Naive thymus-derived CD4-positive, alpha-beta T cell (primary cell): ENCODE measurements at regions of chr10 and their contacts with region 1.

Region 1: GRCh38 chr10:100743626-100744135 is 1.7 kb upstream of the PAX2 start:
- DNase-seq: peak in 6 of 9 donors; percentile 41 to 48 (median 44)
- ATAC-seq: peak; percentile 72
- H3K4me3 ChIP-seq: no peak overlapping the region
- H3K4me3 Mint-ChIP-seq: peak overlapping the region; percentile 23 to 72 (median 58)
- H3K27ac ChIP-seq: no peak overlapping the region
- H3K27ac Mint-ChIP-seq: peak overlapping the region in 1 of 9 donors; percentile 61
- H3K4me1 ChIP-seq: peaks cover 4 to 17% of the 10 kb centered on the region in 2 donors
- H3K4me1 Mint-ChIP-seq: peaks cover 27 to 56% (median 36%) of the 10 kb centered on the region in 7 donors
- H3K27me3 ChIP-seq: peaks cover 10 to 27% of the 10 kb centered on the region in 2 donors
- H3K27me3 Mint-ChIP-seq: peaks cover 60 to 88% (median 66%) of the 10 kb centered on the region in 5 donors

Region 2: GRCh38 chr10:100338434-100339036 is 405.1 kb before region 1 on chr10:
- CTCF ChIA-PET with region 1: no interaction called
- POLR2A ChIA-PET with region 1: no interaction called
- intact Hi-C with region 1: loop called in 1 of 2 experiments (anchors 5 kb)
- DNase-seq: peak; percentile 50 to 82 (median 74)
- ATAC-seq: peak; percentile 94
- H3K4me3 ChIP-seq: no peak overlapping the region
- H3K4me3 Mint-ChIP-seq: no peak overlapping the region
- H3K27ac ChIP-seq: no peak overlapping the region
- H3K27ac Mint-ChIP-seq: peak overlapping the region in 2 of 9 donors; percentile 69 to 82
- H3K4me1 ChIP-seq: no peaks in the 10 kb centered on the region
- H3K4me1 Mint-ChIP-seq: peaks cover 0 to 35% (median 0%) of the 10 kb centered on the region in 7 donors
- H3K27me3 ChIP-seq: no peaks in the 10 kb centered on the region
- H3K27me3 Mint-ChIP-seq: peaks cover 0 to 15% (median 0%) of the 10 kb centered on the region in 5 donors

Region 3: DNA sequence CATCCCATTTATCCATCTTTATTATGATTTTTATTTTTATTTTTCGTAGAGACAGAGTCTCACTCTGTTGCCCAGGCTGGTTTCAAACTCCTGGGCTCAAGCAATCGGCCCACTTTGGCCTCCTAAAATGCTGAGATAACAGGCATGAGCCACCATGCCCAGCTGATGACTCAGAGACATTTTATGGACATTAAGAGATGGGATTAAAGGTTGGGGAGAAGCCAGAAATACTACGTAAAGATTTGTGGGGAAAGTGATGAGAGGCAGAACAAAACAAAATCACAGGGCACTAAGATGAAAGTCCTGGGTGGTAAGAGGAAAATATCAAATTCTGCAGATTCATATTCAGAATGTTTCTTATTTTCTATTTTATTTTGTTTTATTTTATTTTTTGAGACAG is 273.3 kb before region 1 on chr10:
- CTCF ChIA-PET with region 1: no interaction called
- POLR2A ChIA-PET with region 1: no interaction called
- intact Hi-C with region 1: no loop called
- DNase-seq: no peak
- ATAC-seq: no peak
- H3K4me3 ChIP-seq: no peak overlapping the region
- H3K4me3 Mint-ChIP-seq: no peak overlapping the region
- H3K27ac ChIP-seq: no peak overlapping the region
- H3K27ac Mint-ChIP-seq: no peak overlapping the region
- H3K4me1 ChIP-seq: no peaks in the 10 kb centered on the region
- H3K4me1 Mint-ChIP-seq: no peaks in the 10 kb centered on the region
- H3K27me3 ChIP-seq: no peaks in the 10 kb centered on the region
- H3K27me3 Mint-ChIP-seq: peaks cover 0 to 10% (median 0%) of the 10 kb centered on the region in 5 donors

Region 4: GRCh38 chr10:100670828-100671479 is 72.7 kb before region 1 on chr10:
- CTCF ChIA-PET with region 1: no interaction called
- POLR2A ChIA-PET with region 1: no interaction called
- intact Hi-C with region 1: loop called in 1 of 2 experiments (anchors 1 kb)
- DNase-seq: peak in 7 of 9 donors; percentile 31 to 83 (median 38)
- ATAC-seq: peak; percentile 75
- H3K4me3 ChIP-seq: no peak overlapping the region
- H3K4me3 Mint-ChIP-seq: peak overlapping the region in 7 of 10 donors; percentile 16 to 61 (median 36)
- H3K27ac ChIP-seq: no peak overlapping the region
- H3K27ac Mint-ChIP-seq: no peak overlapping the region
- H3K4me1 ChIP-seq: no peaks in the 10 kb centered on the region
- H3K4me1 Mint-ChIP-seq: peaks cover 4 to 13% (median 8%) of the 10 kb centered on the region in 7 donors
- H3K27me3 ChIP-seq: peaks cover 0 to 15% of the 10 kb centered on the region in 2 donors
- H3K27me3 Mint-ChIP-seq: peaks cover 61 to 72% (median 69%) of the 10 kb centered on the region in 5 donors

Region 5: GRCh38 chr10:100683545-100684300 is 60.0 kb before region 1 on chr10:
- CTCF ChIA-PET with region 1: no interaction called
- POLR2A ChIA-PET with region 1: no interaction called
- intact Hi-C with region 1: no loop called
- DNase-seq: no peak
- ATAC-seq: no peak
- H3K4me3 ChIP-seq: no peak overlapping the region
- H3K4me3 Mint-ChIP-seq: no peak overlapping the region
- H3K27ac ChIP-seq: no peak overlapping the region
- H3K27ac Mint-ChIP-seq: no peak overlapping the region
- H3K4me1 ChIP-seq: no peaks in the 10 kb centered on the region
- H3K4me1 Mint-ChIP-seq: peaks cover 0 to 9% (median 5%) of the 10 kb centered on the region in 7 donors
- H3K27me3 ChIP-seq: peaks cover 4 to 16% of the 10 kb centered on the region in 2 donors
- H3K27me3 Mint-ChIP-seq: peaks cover 80 to 88% (median 85%) of the 10 kb centered on the region in 5 donors

Region 6: GRCh38 chr10:101012525-101013364 is 269.1 kb after region 1 on chr10:
- CTCF ChIA-PET with region 1: no interaction called
- POLR2A ChIA-PET with region 1: no interaction called
- intact Hi-C with region 1: loop called in 1 of 2 experiments (anchors 10 kb)
- DNase-seq: peak; percentile 46 to 76 (median 63)
- ATAC-seq: peak; percentile 91
- H3K4me3 ChIP-seq: no peak overlapping the region
- H3K4me3 Mint-ChIP-seq: peak overlapping the region in 1 of 10 donors; percentile 24
- H3K27ac ChIP-seq: no peak overlapping the region
- H3K27ac Mint-ChIP-seq: peak overlapping the region in 3 of 9 donors; percentile 8 to 75 (median 41)
- H3K4me1 ChIP-seq: peaks cover 0 to 5% of the 10 kb centered on the region in 2 donors
- H3K4me1 Mint-ChIP-seq: peaks cover 9 to 21% (median 17%) of the 10 kb centered on the region in 7 donors
- H3K27me3 ChIP-seq: no peaks in the 10 kb centered on the region
- H3K27me3 Mint-ChIP-seq: peaks cover 22 to 39% (median 30%) of the 10 kb centered on the region in 5 donors